Vagina (tissue), 2 donors: ENCODE measurements at regions of chrX and their contacts with region 1.

Region 1: DNA sequence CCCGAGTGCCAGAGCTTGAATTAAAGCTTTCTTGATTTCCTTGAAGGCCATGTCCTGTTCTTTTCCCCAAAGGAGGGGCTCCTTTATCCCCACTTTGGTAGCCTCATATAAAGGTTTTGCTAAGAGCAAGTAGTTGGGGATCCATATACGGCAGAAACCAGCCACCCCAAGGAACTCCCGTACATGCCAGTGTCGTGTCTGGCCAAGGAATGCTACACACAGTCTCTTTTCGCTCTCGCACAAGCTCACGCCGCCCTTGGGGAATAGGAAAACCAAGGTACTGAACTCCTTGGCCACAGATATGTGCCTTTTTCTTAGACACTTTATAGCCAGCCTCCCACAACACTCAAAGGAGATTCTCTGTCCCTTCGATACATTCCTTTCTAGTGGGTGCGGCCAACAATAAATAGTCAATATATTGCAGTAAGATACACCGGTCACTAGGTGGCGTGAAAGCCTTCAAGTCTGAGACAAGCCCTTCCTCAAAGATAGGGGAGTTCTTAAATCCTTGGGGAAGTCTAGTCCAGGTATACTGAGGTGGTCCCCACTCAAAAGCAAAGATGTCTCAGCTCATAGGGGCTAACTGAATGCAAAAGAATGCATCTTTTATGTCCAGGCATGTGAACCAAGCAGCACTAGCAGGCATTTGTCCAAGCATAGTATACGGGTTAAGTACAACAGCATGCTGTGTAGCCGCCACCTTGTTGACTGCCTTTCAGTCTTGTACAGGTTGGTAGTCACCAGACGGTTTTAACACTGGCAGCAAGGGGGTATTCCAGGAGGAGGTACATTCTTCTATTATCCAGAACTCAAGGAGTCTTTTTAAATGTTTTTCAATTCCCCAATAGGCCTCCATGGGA is 57.8 kb upstream of the XAGE1B start:
- DNase-seq: no peak
- H3K4me3 ChIP-seq: no peak overlapping the region
- H3K27ac ChIP-seq: no peak overlapping the region
- H3K4me1 ChIP-seq: no peaks in the 10 kb centered on the region
- H3K27me3 ChIP-seq: no peaks in the 10 kb centered on the region
- CTCF ChIP-seq: peak in 1 of 3 experiments; percentile 42
- POLR2A ChIP-seq: no peak

Region 2: DNA sequence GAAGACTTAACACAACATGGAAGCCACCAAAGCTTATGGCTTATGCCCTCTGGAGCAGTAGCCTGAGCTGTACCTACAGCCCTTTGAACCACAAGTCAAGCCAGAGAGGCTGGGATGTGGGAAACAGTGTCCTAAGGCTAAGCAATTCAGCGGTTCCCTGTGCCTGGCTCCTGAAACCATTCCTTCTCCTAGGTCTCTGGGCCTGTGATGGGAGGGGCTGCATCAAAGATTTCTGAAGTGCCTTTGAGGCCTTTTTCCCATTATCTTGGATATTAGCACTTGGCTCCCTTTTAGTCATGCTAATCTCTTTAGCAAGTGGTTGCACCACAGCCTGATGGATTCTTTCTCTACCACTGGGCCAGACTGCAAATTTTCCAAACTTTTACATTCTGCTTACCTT is 1382.5 kb before region 1 on chrX:
- intact Hi-C with region 1: no loop called
- DNase-seq: no peak
- H3K4me3 ChIP-seq: no peak overlapping the region
- H3K27ac ChIP-seq: no peak overlapping the region
- H3K4me1 ChIP-seq: no peaks in the 10 kb centered on the region
- H3K27me3 ChIP-seq: no peaks in the 10 kb centered on the region
- CTCF ChIP-seq: no peak
- POLR2A ChIP-seq: no peak

Region 3: GRCh38 chrX:51641421-51642021 is 933.1 kb before region 1 on chrX:
- intact Hi-C with region 1: loop called (anchors 5 kb)
- DNase-seq: no peak
- H3K4me3 ChIP-seq: no peak overlapping the region
- H3K27ac ChIP-seq: no peak overlapping the region
- H3K4me1 ChIP-seq: no peaks in the 10 kb centered on the region
- H3K27me3 ChIP-seq: no peaks in the 10 kb centered on the region
- CTCF ChIP-seq: no peak
- POLR2A ChIP-seq: no peak

Region 4: DNA sequence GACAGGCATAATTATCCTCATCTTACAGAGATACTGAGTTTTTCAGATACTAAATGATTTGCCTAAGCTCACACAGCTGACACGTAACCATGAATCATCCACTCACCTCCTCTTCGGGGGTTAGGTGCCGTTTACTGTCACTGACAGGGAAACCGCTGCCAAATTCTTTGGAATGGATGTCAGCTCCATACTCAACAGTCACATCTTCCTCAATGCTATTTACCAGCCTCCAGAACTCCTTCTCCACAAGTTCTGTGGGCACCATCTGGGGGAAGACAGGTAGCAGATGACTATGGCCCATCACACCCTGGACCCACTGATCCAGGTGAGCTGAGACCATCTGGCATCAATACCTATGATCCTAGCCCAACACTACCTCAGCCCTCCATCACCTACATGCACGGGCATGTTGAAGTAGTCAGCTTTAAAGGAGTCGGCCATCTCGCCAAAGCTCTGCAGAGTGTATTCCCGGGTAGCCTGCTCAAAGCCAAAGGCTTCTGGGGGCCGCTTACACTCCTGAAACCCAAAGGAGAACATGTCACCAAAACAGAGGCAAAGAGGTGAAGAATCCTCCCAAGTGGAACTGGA is 636.8 kb after region 1 on chrX:
- intact Hi-C with region 1: no loop called
- DNase-seq: no peak
- H3K4me3 ChIP-seq: no peak overlapping the region
- H3K27ac ChIP-seq: no peak overlapping the region
- H3K4me1 ChIP-seq: no peaks in the 10 kb centered on the region
- H3K27me3 ChIP-seq: no peaks in the 10 kb centered on the region
- CTCF ChIP-seq: no peak
- POLR2A ChIP-seq: no peak

Region 5: GRCh38 chrX:53882331-53882730 is 1307.7 kb after region 1 on chrX:
- intact Hi-C with region 1: no loop called
- DNase-seq: no peak
- H3K4me3 ChIP-seq: no peak overlapping the region
- H3K27ac ChIP-seq: no peak overlapping the region
- H3K4me1 ChIP-seq: no peaks in the 10 kb centered on the region
- H3K27me3 ChIP-seq: no peaks in the 10 kb centered on the region
- CTCF ChIP-seq: no peak
- POLR2A ChIP-seq: no peak